Panc1 (cell line): ENCODE measurements at regions of chr5 and their contacts with region 1.

Region 1: DNA sequence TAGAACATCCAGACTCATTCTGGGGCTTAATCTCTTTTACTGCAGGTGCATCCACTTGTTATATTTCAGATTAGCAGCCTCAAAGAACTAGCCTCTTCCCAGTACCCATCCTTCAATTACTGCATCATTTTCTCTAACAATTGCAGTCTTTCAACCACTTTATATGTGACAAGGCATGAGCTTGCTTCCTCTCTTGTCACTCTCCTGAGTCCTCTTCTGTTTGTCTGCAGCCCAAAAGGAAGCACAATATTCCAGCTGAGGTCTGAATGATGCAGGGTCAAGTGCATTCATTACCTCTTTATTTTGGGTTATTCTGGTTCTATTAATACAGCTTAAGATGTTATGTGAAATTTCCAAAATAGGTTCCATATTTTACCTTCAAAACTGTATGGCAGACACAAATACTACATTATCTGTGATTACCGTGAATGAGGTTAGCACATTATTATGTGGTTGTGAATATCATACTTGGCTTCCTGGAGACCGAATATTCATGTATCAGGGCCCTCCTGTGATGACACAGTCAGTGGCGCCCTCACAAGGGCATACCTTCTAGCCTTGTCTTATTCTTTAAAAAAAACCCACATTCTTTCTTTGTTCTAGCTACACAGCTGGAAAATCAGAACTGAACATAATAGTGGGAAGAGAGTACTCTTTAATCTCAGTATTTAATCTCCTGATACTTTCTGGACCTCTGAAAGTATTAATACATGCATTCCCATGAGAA is 323.8 kb downstream of the PDE4D start:
- DNase-seq: no peak
- ATAC-seq: no peak
- H3K4me3 ChIP-seq: no peak overlapping the region
- H3K27ac ChIP-seq: no peak overlapping the region
- H3K4me1 ChIP-seq: no peaks in the 10 kb centered on the region
- H3K27me3 ChIP-seq: no peaks in the 10 kb centered on the region
- CTCF ChIP-seq: no peak

Region 2: DNA sequence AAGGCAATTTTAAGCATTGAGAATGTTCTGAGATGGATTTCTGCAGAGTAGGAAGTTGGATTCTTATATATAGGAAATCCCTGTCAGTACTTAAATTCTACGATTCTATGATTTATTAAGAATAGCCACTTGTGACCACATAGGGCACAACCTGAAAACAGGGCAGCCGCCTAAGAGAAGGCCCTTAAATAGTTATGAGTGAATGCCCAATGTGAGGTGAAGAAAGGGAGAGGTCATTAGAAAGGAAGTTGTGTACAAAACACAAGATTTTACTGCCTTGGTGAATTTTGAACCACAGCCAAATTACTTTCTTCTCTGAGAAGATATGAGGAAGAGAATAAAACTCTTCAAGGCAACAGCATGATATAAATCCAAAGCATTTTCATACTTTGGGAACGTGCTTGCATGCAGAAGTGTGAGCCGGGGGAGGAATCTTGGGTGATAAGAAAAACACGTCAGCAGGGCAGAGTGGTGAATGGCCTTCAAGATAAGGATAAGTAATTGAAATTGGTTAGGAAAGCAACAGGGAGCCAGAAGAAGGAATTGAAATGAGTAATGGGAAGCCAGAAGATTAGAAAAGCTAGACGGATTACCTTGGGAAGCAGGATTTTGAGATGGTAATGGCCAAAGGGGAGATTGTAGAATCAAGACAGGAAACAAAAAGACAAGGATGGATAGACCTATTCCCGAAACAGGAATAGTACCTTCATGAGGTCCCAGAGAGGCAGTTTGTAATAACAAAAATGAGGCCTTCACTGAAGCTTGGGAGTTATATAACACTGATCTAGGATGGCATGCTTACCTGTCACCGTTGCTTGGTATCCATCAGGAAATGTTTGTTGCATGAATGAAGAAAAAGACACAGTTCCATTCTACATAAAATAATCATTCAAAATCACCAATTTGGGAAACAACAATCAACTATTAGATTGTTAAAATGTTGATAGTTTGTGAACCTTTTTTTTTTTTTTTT is 79.5 kb after region 1 on chr5:
- CTCF ChIA-PET with region 1: no interaction called
- POLR2A ChIA-PET with region 1: interaction called, 14 read pairs
- in situ Hi-C with region 1: no loop called
- intact Hi-C with region 1: no loop called
- DNase-seq: no peak
- ATAC-seq: no peak
- H3K4me3 ChIP-seq: no peak overlapping the region
- H3K27ac ChIP-seq: no peak overlapping the region
- H3K4me1 ChIP-seq: no peaks in the 10 kb centered on the region
- H3K27me3 ChIP-seq: no peaks in the 10 kb centered on the region
- CTCF ChIP-seq: no peak